ENCODE measurements at regions of chr14 and their contacts with region 1.

Region 1: GRCh38 chr14:90060312-90060964 is 1.4 kb upstream of the KCNK13 start:
- DNase-seq: peak; percentile 74
- H3K4me3 ChIP-seq: peak overlapping the region; percentile 49
- H3K27ac ChIP-seq: no peak overlapping the region
- H3K4me1 ChIP-seq: peaks cover 18% of the 10 kb centered on the region
- H3K27me3 ChIP-seq: peaks cover 85% of the 10 kb centered on the region
- CTCF ChIP-seq: peak; percentile 74

Region 2: DNA sequence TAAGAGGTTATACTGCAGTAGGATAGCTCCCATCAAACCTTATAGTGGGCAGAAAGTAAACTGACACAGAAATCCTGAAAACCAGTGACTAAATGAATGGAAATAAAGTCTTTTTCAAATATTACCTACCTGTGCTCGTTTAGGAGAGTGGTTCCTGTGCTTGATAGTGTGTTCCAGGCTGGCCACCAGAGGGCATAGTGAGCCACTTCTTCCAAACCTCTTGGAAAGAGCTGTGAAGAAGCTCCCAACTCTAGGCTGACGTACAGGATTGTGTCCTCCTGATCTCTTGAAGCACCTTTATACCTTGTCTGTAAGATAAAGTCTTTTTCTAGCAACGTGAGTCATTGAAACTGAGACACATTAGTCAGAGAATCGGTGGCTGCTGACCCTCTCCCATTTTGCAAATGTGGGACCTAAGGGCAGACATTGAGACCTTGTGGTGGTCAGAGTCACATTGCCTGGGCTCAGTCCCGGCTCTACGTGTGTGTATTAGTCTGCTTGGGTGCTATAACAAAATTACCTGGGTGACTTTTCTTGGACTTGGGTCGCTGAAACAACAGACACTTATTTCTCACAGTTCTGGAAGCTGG is 87.1 kb before region 1 on chr14:
- CTCF ChIA-PET with region 1: interaction called, 8 read pairs
- POLR2A ChIA-PET with region 1: no interaction called
- intact Hi-C with region 1: loop called (anchors 2 kb)
- DNase-seq: peak; percentile 76
- H3K4me3 ChIP-seq: no peak overlapping the region
- H3K27ac ChIP-seq: no peak overlapping the region
- H3K4me1 ChIP-seq: no peaks in the 10 kb centered on the region
- H3K27me3 ChIP-seq: no peaks in the 10 kb centered on the region
- CTCF ChIP-seq: peak; percentile 88

Region 3: GRCh38 chr14:90396341-90397339 is 336.2 kb after region 1 on chr14 and contains the start of gene CALM1:
- CTCF ChIA-PET with region 1: no interaction called
- POLR2A ChIA-PET with region 1: no interaction called
- intact Hi-C with region 1: no loop called
- DNase-seq: peak; percentile 94
- H3K4me3 ChIP-seq: peak within 1 kb of the TSS; percentile 90
- H3K27ac ChIP-seq: peak within 1 kb of the TSS; percentile 82
- H3K4me1 ChIP-seq: peaks cover 31% of the 10 kb centered on the region
- H3K27me3 ChIP-seq: no peaks in the 10 kb centered on the region
- CTCF ChIP-seq: no peak
- total RNA-seq, gene CALM1: 961 and 998 TPM in 2 replicates

Measured in A673 (cell line).